ENCODE measurements at regions of chr1 and their contacts with region 1.

Region 1: DNA sequence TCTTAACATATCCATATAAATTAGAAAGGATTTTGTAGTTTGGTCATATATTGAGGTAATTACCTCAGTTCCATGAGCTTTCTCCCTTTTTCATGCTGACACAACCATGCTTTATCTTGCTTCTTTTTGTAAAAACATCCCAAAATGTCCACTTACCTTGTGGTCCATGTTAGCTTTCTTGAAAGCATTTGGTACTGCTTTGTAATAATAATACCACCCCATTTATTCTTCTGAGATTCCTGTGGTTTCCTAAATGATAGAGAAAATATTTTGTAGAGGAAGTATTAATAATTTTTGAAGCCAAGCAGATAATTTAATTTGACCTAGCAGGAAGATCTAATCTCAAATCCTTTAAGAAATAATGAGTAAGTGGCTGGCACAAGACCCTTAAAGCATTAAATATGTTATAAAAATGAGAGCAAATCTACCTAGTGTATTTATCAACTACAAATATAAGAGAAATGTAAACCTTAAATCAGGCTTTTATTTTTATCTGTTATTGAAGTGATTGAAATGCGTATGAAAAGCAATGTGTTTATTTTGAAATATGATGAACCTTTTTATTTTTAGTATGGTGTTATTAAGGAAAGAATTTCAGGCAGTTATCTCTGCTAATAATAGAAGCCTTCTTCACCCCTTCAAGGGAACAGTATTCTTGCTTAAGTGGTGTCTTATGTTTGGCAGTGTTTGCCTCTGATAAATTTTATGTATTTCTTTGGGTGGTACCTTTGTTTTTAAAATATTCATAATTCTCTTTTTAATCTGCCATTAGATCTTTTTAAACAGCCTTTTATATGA is 9.2 kb downstream of the PRKAA2 start:
- DNase-seq: no peak

Region 2: GRCh38 chr1:55696181-55696754 is 958.1 kb before region 1 on chr1:
- intact Hi-C with region 1: no loop called
- DNase-seq: no peak

Region 3: GRCh38 chr1:55965981-55966461 is 688.3 kb before region 1 on chr1:
- intact Hi-C with region 1: no loop called
- DNase-seq: no peak

Region 4: GRCh38 chr1:56798053-56798471 is 143.7 kb after region 1 on chr1:
- intact Hi-C with region 1: loop called (anchors 2 kb)
- DNase-seq: no peak

Region 5: GRCh38 chr1:56948403-56949023 is 294.2 kb after region 1 on chr1:
- intact Hi-C with region 1: no loop called
- DNase-seq: no peak

Measured in cardiac septum (tissue), 1 donor.